ENCODE measurements at regions of chr16 and their contacts with region 1.

Region 1: GRCh38 chr16:85187002-85187401 is 74.7 kb upstream of the CIBAR2 start:
- DNase-seq: no peak
- H3K4me3 ChIP-seq: no peak overlapping the region
- H3K27ac ChIP-seq: no peak overlapping the region
- H3K4me1 ChIP-seq: peaks cover 0 to 3% (median under 1%) of the 10 kb centered on the region in 4 experiments; a peak in 5 of 7 replicates
- H3K27me3 ChIP-seq: no peaks in the 10 kb centered on the region
- CTCF ChIP-seq: no peak
- EP300 ChIP-seq: no peak
- POLR2A ChIP-seq: no peak
- RAD21 ChIP-seq: no peak

Region 2: DNA sequence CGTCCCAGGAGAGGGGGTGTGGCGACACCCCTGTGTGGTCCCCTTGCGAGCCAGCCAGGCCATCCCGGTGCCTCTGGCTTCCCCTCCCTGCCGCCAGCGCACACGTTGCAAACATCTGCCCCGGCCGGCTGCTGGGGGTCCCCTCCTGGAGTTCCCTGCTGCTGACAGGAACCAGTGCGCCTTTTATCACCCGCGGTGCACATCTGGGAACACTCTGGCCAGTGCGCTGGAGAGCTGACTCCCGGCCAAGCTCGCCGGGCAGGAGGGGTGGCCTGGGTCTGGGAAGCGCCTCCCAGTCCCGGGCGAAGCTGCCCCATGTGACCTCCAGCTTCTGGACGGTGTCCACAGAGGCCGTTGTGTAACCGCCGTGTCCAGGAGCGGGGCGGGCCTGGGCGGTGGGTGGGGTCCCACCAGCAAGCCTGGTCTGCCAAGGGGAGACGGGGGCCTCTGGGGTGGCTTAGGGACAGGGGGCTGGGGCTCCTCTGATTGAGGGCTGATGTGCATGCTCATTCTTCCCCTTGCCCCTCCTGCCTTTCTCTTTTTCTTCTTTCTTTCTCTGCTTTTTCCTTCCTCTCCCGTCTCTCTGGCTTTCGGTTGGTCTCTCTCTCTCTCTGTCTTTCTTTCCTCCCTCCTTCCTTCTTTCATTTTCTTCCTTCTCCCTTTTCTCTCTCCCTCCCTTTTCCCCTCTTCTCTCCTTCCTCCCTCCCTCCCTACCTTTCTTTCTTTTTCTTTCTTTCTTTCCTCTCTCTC is 49.5 kb before region 1 on chr16:
- CTCF ChIA-PET with region 1: no interaction called
- POLR2A ChIA-PET with region 1: no interaction called
- DNase-seq: no peak
- H3K4me3 ChIP-seq: no peak overlapping the region
- H3K27ac ChIP-seq: no peak overlapping the region
- H3K4me1 ChIP-seq: peaks cover 0 to 11% (median 2%) of the 10 kb centered on the region in 4 experiments; a peak in 4 of 7 replicates
- H3K27me3 ChIP-seq: no peaks in the 10 kb centered on the region
- CTCF ChIP-seq: no peak
- EP300 ChIP-seq: no peak
- POLR2A ChIP-seq: no peak
- RAD21 ChIP-seq: no peak

Region 3: DNA sequence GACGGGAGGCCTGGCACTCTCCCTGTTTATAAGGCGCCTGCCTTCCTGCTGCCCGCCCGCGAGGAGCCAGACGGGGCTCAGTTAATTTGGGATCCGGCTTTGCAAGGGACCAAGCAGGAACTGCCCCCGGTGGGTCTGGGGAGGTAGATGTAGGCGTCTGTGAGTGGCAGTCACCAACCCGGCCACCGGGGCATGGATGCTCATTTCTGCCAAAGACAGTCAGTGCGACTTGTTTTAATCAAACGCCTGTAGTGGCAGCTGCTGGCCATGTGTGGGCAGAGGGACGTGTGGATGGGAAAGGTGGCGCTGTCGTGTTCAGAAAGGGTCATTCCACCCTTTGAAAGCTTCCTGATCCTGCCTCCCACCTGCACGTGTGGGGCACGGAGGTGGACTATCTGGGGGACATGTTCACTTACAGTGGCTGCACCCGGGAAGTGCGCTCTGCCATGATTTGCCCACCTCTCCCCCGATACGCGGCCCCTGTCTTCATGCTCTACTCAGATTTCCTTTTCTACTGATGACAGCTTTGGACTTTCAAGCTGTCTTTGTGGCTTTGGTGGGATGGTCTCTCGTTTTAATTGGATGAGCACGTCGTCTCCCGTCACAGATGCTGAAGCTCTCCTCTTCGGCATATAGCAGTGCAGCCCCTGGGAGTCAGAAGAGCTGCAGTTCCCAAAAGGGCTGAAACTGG is 14.4 kb before region 1 on chr16:
- CTCF ChIA-PET with region 1: interaction called, 35 read pairs
- POLR2A ChIA-PET with region 1: interaction called, 3 read pairs
- DNase-seq: peak in 1 of 2 experiments; percentile 70
- H3K4me3 ChIP-seq: peak overlapping the region in 2 of 4 experiments; percentile 14; a peak in 1 of 8 replicates
- H3K27ac ChIP-seq: no peak overlapping the region
- H3K4me1 ChIP-seq: peaks cover 6 to 41% (median 18%) of the 10 kb centered on the region in 4 experiments
- H3K27me3 ChIP-seq: peaks cover 1 to 22% (median 15%) of the 10 kb centered on the region in 4 experiments; a peak in 6 of 7 replicates
- CTCF ChIP-seq: peak; percentile 66 to 89 (median 69)
- EP300 ChIP-seq: no peak
- POLR2A ChIP-seq: no peak
- RAD21 ChIP-seq: peak; percentile 23 to 45; a peak in 2 of 4 replicates

Region 4: GRCh38 chr16:85202631-85203461 is 15.8 kb after region 1 on chr16:
- CTCF ChIA-PET with region 1: interaction called, 17 read pairs
- POLR2A ChIA-PET with region 1: interaction called, 5 read pairs
- DNase-seq: no peak
- H3K4me3 ChIP-seq: no peak overlapping the region
- H3K27ac ChIP-seq: peak overlapping the region; percentile 51; the same call in 1 of the 2 replicates
- H3K4me1 ChIP-seq: peaks cover 3 to 41% (median 30%) of the 10 kb centered on the region in 4 experiments
- H3K27me3 ChIP-seq: no peaks in the 10 kb centered on the region; a peak in 1 of 7 replicates
- CTCF ChIP-seq: no peak
- EP300 ChIP-seq: no peak
- POLR2A ChIP-seq: no peak; a peak in 1 of 3 replicates
- RAD21 ChIP-seq: no peak

Region 5: DNA sequence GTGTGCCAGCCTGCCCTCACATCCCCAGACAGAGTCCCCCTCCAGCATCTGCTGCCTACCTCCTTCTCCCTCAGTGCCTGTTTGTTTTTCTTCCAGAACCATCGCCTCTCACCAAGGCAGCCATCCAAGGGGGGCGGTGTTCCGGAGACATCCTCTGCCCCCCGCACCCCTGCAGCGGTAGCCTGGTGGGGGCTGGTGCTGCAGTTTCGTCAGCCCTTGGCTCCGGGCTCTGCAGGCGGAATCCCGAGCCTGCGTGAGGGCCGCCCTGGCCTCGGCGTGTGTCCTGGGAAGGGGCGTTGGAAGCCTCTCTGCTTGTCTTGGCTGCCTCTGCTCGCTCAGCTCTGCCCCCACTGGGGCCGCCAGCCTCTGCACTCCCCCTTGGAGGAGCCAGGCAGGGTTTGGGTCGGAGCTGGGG is 51.2 kb after region 1 on chr16:
- CTCF ChIA-PET with region 1: interaction called, 13 read pairs
- POLR2A ChIA-PET with region 1: interaction called, 5 read pairs
- DNase-seq: peak in 1 of 2 experiments; percentile 79
- H3K4me3 ChIP-seq: no peak overlapping the region
- H3K27ac ChIP-seq: no peak overlapping the region
- H3K4me1 ChIP-seq: peaks cover 4 to 41% (median 27%) of the 10 kb centered on the region in 4 experiments
- H3K27me3 ChIP-seq: no peaks in the 10 kb centered on the region; a peak in 2 of 7 replicates
- CTCF ChIP-seq: peak; percentile 50 to 59 (median 58)
- EP300 ChIP-seq: no peak
- POLR2A ChIP-seq: no peak
- RAD21 ChIP-seq: peak; percentile 39 to 48; a peak in 3 of 4 replicates

Region 6: DNA sequence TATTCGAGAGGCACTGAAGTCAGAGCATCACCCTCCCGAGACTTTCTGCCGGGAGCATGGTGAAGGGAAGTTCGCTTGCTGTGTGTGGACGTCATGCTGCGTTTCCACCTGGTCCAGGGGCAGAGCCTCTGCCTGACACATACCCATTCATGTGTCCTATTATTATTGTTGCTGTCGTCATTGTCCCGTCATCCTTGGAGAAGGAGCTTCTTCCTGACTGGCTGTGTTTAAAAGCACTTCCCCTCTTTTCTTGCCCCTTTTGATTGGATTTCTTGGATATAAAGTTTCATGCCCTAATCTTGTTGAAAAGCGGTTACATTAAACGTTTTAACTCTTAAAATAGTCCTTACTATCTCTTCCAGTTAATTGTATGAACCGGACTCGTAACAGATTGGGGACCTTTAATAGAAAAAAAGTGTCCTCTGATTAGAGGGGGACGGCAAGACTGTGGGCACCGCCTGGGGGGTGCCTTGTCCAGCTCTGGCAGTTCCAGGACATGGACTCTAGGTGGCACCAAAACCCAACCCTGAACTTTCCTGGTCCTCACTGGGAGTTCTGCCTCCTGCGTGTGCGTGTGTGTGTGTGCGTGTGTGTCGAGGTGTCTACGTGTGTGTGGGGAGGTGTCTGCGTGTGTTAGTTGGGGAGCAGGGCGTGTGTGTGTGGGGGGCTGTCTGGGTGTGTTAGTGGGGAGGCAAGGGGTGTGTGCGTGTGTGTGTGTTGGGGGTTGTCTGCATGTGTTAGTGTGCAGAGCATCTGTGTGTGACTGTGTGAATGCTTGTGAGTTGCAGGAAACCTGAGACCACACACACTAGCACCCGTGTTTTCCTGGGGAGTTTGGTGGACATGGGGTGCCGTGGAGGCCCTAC is 58.5 kb after region 1 on chr16:
- CTCF ChIA-PET with region 1: interaction called, 13 read pairs
- POLR2A ChIA-PET with region 1: no interaction called
- DNase-seq: peak in 1 of 2 experiments; percentile 82
- H3K4me3 ChIP-seq: no peak overlapping the region
- H3K27ac ChIP-seq: no peak overlapping the region
- H3K4me1 ChIP-seq: peaks cover 0 to 32% (median 10%) of the 10 kb centered on the region in 4 experiments; a peak in 5 of 7 replicates
- H3K27me3 ChIP-seq: no peaks in the 10 kb centered on the region
- CTCF ChIP-seq: peak; percentile 80 to 91 (median 85)
- EP300 ChIP-seq: no peak
- POLR2A ChIP-seq: no peak
- RAD21 ChIP-seq: peak; percentile 77 to 81